GM13977 (cell line): ENCODE measurements at regions of chr13 and their contacts with region 1.

Region 1: DNA sequence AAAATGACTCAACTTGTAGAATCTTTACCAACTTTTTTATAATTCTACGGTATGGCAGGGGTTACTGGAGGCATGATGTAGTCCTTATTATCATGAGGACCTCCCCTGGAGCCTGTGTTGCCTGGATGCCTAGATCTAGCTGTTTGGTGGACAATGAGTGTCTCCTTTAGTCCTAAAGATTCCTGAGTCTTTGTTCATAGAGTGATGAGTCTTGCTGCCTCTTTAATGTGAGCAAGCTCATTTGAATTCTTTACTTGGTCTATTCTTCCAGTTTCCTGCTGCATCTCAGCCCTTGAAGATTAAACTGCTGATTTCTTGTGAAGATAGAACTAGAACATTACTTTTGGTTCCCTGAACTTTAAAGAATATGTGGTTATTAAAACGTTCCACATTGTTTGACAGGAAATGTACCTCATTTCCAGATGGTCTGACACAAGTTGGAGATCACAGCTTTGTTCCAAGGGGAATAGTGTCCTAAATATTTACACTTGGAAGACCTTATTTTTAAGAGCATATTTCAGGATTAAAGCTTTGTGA is 51.9 kb downstream of the SLAIN1 start:
- DNase-seq: no peak
- CTCF ChIP-seq: no peak

Region 2: DNA sequence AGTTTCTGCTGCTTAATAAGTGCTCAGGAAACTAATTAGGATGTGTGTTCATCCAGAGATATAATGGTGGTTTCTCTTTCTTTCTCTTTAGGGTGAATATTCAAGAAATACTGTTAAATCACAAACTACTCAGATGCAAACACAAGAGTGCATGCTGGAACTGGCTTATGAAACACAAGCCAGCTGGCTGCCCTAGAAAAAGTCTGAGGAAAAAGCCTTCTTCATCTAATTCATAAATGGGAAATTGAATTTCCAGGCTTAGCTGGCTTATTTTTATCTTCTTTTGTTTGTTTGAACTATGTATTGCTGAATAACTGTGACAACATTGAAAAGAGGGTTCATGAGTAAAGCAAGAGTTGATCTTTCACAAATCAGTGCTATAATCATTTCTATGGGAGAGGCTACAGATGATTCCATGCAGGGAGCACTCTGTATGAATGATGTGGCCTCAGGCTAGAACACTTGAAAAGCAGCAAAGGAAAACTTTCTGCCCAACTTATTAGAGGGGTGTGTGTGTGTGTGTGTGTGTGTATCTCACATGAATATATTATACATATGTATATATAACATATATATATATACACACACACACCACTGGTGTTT is 283.7 kb before region 1 on chr13:
- in situ Hi-C with region 1: no loop called
- DNase-seq: no peak
- CTCF ChIP-seq: no peak

Region 3: DNA sequence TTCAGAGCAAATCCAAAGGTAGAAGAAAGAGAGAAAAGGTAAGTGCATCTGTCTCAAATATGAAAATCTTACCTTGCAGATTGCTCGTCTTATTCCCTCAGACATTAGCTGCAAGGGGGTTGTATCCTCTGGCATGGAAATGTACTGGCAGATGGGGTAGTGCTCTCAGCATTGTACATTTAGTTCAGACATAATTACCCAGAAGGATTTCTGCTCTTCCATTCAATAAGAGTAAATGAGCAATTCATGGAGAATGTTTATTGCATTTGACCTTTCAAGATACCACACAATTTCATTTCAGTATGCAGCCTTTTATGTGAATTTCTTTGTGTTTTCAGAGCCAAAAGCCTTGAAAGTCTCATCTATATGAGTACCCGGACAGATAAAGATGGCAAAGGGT is 150.1 kb before region 1 on chr13:
- in situ Hi-C with region 1: loop called (anchors 5 kb)
- DNase-seq: no peak
- CTCF ChIP-seq: no peak

Region 4: GRCh38 chr13:78777976-78778375 is 1028.6 kb after region 1 on chr13:
- in situ Hi-C with region 1: no loop called
- DNase-seq: no peak
- CTCF ChIP-seq: no peak